Cardiac septum (tissue), 1 donor: ENCODE measurements at regions of chr19 and their contacts with region 1.

Region 1: DNA sequence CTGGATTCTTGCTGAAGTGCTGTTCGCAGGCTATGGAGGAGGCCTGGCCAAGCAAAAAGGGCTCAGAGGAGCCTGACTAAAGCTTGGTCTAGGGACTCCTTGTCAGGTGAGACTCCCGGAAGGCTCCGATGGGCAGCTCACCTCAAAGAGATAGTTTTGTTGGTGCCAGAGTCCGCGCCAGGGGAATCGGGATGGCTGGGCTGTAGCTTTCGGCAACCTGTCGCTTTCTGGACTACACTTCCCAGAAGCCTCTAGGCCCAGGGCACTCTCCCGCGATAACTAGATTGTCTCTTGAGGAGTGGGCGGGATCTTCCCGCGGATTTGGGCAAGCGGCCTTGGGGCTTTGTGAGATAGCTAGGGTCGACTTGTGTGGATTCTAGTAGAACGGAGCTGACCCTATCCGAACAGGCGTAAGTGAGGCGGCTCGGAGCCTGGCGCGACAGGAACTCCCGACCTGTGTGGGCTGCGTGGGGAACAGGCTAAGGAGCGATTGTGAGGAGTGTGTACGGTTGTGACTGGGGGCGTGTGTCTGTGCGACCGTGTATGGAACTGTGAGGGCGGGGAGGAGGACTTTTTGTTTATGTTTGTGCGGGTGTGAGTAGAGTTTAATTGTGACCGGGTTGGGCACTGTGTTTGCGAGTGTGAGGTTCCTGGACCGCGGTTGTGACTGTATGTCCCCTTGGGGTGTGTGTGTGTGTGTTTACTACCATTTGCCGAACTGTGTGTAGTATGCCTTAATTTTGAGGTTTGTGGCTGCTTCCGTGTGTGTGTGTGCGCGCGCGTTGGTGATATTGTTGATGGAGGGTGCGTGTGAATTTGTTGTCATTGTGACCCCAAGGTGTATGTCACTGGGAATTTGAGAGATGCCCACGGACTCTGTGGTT is at the start of gene ZNF345:
- DNase-seq: peak; percentile 94
- total RNA-seq, gene ZNF345: 2.7 TPM

Region 2: DNA sequence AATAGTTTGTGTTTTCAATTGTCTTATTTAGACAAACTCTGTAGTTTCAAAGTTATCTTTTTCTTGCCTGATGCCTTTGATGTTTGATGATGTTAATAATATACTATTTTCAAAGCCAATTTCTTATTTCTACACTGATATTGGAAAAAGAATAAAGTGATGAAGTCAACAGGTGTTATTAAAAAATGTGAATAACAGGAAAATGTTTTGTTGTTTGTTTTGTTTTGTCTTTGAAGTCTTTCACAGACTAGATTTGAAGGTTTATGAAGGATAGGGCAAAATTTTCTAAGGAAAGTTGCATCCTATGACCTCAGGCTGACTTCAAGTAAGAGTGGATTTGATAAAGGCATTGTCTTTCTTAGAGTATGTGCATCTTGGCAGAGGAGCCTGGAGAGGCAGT is 43.8 kb before region 1 on chr19:
- intact Hi-C with region 1: no loop called
- DNase-seq: no peak

Region 3: GRCh38 chr19:36837906-36838783 is 12.7 kb before region 1 on chr19 and contains the start of gene ZNF790:
- intact Hi-C with region 1: loop called (anchors 1 kb)
- DNase-seq: peak; percentile 92
- total RNA-seq, gene ZNF790: 7.8 TPM

Region 4: GRCh38 chr19:36915992-36916830 is 65.4 kb after region 1 on chr19 and contains the starts of genes ZNF568 and ZNF829:
- intact Hi-C with region 1: loop called (anchors 5 kb)
- DNase-seq: peak; percentile 95
- total RNA-seq, gene ZNF568: 7.1 TPM
- total RNA-seq, gene ZNF829: 2.8 TPM